K562 (cell line): ENCODE measurements at regions of chr9 and their contacts with region 1.

Region 1: DNA sequence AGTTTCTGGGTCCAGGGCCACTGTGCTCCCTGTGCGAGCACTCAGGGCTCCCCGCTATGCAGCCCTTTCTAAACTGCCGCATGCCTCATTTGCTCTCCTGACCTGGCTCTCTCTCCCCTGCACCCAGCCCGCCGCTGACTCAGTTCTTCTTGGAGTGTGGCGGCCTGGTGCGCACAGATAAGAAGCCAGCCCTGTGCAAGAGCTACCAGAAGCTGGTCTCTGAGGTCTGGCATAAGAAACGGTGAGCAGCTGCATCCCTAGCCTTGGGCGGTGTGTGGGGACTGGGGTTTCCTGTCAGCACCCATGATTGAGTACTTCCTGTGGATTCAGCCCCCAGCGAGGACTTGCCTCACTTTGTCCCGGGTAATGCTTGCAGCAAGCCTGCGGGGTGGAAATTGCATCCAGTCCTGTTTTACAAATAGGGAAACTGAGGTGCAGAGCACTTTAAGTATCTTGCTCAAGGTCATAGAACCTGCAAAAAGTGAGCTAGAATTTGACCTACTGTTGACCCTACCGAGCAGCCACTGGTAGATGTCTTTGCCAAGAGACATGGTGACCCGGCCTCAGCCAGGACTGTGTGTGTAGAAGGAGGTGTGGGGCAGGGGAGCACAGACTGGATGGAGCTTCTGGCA is 27.9 kb downstream of the USP20 start:
- DNase-seq: peak; percentile 97 to 100 (median 98)
- ATAC-seq: peak; percentile 91
- H3K4me3 ChIP-seq: peak overlapping the region; percentile 0; the same call in 1 of the 2 replicates
- H3K27ac ChIP-seq: peak overlapping the region; percentile 93
- H3K4me1 ChIP-seq: peaks cover 58 to 80% of the 10 kb centered on the region in 2 experiments
- H3K27me3 ChIP-seq: no peaks in the 10 kb centered on the region
- CTCF ChIP-seq: peak in 1 of 3 experiments; percentile 6; a peak in 2 of 6 replicates
- EP300 ChIP-seq: peak; percentile 99
- POLR2A ChIP-seq: peak; percentile 68; the same call in 1 of the 2 replicates
- RAD21 ChIP-seq: peak; percentile 67 to 70

Region 2: DNA sequence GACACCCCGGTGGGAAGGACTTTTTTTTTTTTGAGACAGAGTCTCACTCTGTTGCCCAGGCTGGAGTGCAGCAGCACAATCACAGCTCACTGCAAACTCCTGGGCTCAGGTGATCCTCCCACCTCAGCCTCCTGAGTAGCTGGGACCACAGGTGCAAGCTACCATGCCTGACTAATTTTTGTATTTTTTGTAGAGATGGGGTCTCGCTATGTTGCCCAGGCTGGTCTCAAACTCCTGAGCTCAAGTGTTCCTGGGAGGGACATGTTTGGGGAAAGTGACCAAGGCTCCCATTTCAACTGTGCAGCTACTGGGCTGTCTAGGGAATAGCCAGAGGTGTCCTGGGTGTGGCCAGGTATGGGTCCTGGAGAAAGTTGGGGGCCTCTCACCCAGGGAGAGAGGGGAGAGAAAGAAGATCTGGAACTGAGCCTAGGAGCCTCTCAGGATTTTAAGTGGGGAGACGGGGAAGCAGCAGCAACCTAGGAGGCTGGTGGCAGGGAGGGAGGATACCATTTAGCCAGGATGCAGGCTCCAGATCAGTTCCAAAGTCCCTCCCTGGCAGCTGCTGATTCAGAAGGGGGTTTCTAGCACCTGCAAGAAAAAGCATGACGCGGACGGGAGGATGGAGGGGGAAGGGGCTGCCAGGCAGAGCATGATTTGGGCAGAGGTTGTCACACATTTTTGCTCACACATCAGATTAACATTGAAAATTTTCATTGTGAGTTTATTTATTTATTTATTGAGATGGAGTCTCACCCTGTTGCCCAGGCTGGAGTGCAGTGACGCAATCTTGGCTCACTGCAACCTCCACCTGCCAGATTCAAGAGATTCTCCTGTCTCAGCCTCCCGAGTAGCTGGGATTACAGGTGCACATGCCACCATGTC is 66.9 kb before region 1 on chr9:
- CTCF ChIA-PET with region 1: no interaction called
- POLR2A ChIA-PET with region 1: no interaction called
- in situ Hi-C with region 1: no loop called
- intact Hi-C with region 1: no loop called
- DNase-seq: peak in 1 of 4 experiments; percentile 9
- ATAC-seq: no peak
- H3K4me3 ChIP-seq: no peak overlapping the region
- H3K27ac ChIP-seq: no peak overlapping the region
- H3K4me1 ChIP-seq: no peaks in the 10 kb centered on the region
- H3K27me3 ChIP-seq: peaks cover 35 to 43% of the 10 kb centered on the region in 2 experiments
- CTCF ChIP-seq: no peak
- EP300 ChIP-seq: no peak
- POLR2A ChIP-seq: no peak
- RAD21 ChIP-seq: no peak

Region 3: GRCh38 chr9:129823935-129824601 is 39.1 kb before region 1 on chr9 and contains the start of gene TOR1A:
- CTCF ChIA-PET with region 1: no interaction called
- POLR2A ChIA-PET with region 1: interaction called, 6 read pairs
- in situ Hi-C with region 1: no loop called
- intact Hi-C with region 1: loop called (anchors 1 kb)
- DNase-seq: peak; percentile 95 to 99 (median 96)
- ATAC-seq: peak; percentile 95
- H3K4me3 ChIP-seq: peak within 1 kb of the TSS; percentile 88
- H3K27ac ChIP-seq: peak within 1 kb of the TSS; percentile 83
- H3K4me1 ChIP-seq: peaks cover 12 to 13% of the 10 kb centered on the region in 2 experiments; a peak in 4 of 5 replicates
- H3K27me3 ChIP-seq: no peaks in the 10 kb centered on the region
- CTCF ChIP-seq: no peak; a peak in 1 of 6 replicates
- EP300 ChIP-seq: peak; percentile 44
- POLR2A ChIP-seq: peak; percentile 96
- RAD21 ChIP-seq: no peak; a peak in 2 of 4 replicates
- polyA plus RNA-seq, gene TOR1A: 4.5 to 9.9 TPM

Region 4: DNA sequence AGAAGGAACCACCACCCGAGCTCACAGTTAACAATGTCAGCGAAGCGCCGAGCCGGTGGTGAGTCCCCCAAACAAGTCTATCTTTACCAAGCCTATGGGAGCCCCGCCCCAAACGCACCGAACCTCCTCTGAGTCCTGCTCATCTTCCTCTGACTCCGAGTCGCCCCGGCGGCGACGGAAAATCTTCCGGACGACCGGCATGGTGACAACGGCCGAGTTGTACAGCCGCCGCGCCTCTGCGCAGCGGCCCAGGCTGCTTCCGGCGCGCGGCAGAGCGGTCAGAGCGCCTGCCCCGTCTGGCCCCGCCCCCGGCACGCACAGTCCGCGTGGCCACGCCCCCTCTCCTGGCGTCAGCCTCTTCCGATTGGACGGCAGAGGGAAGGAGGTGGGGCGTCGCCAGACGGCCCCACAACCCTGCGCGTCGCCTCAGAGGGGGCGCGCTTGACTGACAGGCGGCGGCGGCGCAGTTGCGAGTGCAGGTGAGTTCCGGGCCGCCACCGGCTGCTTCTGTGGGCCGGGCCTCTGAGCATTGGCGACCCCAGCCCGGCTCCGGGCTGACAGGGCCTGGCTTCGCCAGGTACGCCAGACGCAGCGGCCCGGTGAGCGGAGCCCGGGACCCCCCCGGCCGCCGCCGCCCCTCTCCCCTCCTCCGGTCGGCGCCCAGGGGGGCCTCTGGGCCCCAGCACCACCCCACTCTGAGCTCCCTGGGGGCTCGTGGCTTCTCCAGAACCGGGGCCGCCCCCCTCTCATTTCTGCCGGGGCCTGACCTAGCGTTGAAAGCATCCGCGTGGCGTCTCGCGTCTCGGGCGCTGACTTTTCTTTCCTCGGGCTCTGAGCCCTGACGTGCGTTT is 27.9 kb before region 1 on chr9 and contains the starts of genes C9orf78 and USP20:
- CTCF ChIA-PET with region 1: no interaction called
- POLR2A ChIA-PET with region 1: interaction called, 8 read pairs
- in situ Hi-C with region 1: no loop called
- intact Hi-C with region 1: loop called (anchors 1 kb)
- DNase-seq: peak; percentile 100
- ATAC-seq: peak; percentile 95
- H3K4me3 ChIP-seq: peak within 1 kb of the TSS; percentile 90
- H3K27ac ChIP-seq: peak within 1 kb of the TSS; percentile 80
- H3K4me1 ChIP-seq: peaks cover 45 to 48% of the 10 kb centered on the region in 2 experiments
- H3K27me3 ChIP-seq: no peaks in the 10 kb centered on the region
- CTCF ChIP-seq: peak in 1 of 3 experiments; percentile 9; a peak in 2 of 6 replicates
- EP300 ChIP-seq: peak; percentile 21; the same call in 1 of the 2 replicates
- POLR2A ChIP-seq: peak; percentile 95
- RAD21 ChIP-seq: 0 out of 4 replicates have a peak, but pooled peaks of 1 of the 2 experiments have one; percentile 10
- polyA plus RNA-seq, gene C9orf78: 132 to 266 TPM
- polyA plus RNA-seq, gene USP20: 1.9 to 3.2 TPM

Region 5: DNA sequence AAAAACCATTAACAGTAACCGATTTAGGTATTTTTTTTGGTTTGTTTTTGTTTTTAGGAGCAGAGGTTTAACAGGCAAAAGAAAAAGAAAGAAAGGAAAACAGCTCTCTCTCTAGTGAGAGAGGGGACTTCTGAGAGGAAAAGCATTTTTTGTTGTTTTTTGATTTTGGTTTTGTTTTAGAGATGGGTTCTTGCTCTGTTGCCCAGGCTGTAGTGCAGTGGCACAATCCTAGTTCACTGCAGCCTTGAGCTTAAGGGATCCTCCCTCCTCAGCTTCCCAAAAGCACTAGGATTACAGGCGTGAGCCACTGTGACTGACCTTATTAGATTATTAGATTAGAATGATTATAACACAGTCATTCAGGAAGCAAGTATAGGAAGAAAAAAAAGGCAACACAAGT is 17.8 kb before region 1 on chr9:
- CTCF ChIA-PET with region 1: no interaction called
- POLR2A ChIA-PET with region 1: interaction called, 91 read pairs
- in situ Hi-C with region 1: no loop called
- intact Hi-C with region 1: no loop called
- DNase-seq: no peak
- ATAC-seq: no peak
- H3K4me3 ChIP-seq: no peak overlapping the region
- H3K27ac ChIP-seq: peak overlapping the region; percentile 23; the same call in 1 of the 3 replicates
- H3K4me1 ChIP-seq: peaks cover 0 to 14% of the 10 kb centered on the region in 2 experiments; a peak in 3 of 5 replicates
- H3K27me3 ChIP-seq: no peaks in the 10 kb centered on the region
- CTCF ChIP-seq: no peak
- EP300 ChIP-seq: no peak
- POLR2A ChIP-seq: no peak
- RAD21 ChIP-seq: no peak

Region 6: GRCh38 chr9:129850821-129851540 is 12.2 kb before region 1 on chr9:
- CTCF ChIA-PET with region 1: no interaction called
- POLR2A ChIA-PET with region 1: interaction called, 91 read pairs
- in situ Hi-C with region 1: no loop called
- intact Hi-C with region 1: no loop called
- DNase-seq: no peak
- ATAC-seq: no peak
- H3K4me3 ChIP-seq: no peak overlapping the region
- H3K27ac ChIP-seq: no peak overlapping the region
- H3K4me1 ChIP-seq: peaks cover 0 to 4% of the 10 kb centered on the region in 2 experiments; a peak in 2 of 5 replicates
- H3K27me3 ChIP-seq: no peaks in the 10 kb centered on the region
- CTCF ChIP-seq: no peak
- EP300 ChIP-seq: no peak
- POLR2A ChIP-seq: no peak
- RAD21 ChIP-seq: no peak

Region 7: DNA sequence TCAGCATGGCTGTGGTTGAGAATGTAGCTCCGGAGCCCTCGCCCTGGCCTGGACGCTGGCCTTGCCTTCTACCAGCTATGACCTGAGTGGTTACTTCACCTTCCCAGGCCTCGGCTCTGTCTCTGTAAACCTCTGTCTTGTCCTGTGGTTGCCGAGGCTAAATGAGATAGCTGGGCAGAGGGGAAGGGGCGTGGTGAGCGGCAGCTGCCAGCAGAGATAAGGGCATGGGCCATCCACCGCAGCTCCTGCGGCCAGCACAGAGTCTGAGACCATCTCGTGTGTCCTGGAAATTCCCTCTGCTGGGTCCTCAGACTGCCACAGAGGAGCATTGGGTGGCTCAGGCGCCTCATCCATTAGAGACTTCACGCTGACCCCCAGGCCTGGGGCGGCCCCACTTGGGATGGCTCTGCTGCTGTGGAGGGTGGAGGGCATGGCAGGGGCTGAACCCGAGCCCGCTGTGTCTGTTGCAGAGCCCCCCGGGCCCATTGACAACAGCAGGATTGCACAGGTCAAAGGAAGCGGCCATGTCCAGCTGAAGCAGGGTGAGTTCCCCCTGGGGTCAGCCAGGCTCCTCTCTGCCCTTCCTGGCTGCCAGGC is 16.0 kb after region 1 on chr9:
- CTCF ChIA-PET with region 1: no interaction called
- POLR2A ChIA-PET with region 1: interaction called, 30 read pairs
- in situ Hi-C with region 1: no loop called
- intact Hi-C with region 1: loop called (anchors 1 kb)
- DNase-seq: peak; percentile 96 to 99 (median 96)
- ATAC-seq: no peak
- H3K4me3 ChIP-seq: no peak overlapping the region
- H3K27ac ChIP-seq: no peak overlapping the region
- H3K4me1 ChIP-seq: peaks cover 8 to 48% of the 10 kb centered on the region in 2 experiments
- H3K27me3 ChIP-seq: no peaks in the 10 kb centered on the region; a peak in 1 of 5 replicates
- CTCF ChIP-seq: peak in 2 of 3 experiments; percentile 7 to 11; a peak in 3 of 6 replicates
- EP300 ChIP-seq: peak; percentile 98
- POLR2A ChIP-seq: no peak
- RAD21 ChIP-seq: peak in 1 of 2 experiments; percentile 56; a peak in 3 of 4 replicates